Lower leg skin (tissue), 4 donors: ENCODE measurements at regions of chr1 and their contacts with region 1.

Region 1: DNA sequence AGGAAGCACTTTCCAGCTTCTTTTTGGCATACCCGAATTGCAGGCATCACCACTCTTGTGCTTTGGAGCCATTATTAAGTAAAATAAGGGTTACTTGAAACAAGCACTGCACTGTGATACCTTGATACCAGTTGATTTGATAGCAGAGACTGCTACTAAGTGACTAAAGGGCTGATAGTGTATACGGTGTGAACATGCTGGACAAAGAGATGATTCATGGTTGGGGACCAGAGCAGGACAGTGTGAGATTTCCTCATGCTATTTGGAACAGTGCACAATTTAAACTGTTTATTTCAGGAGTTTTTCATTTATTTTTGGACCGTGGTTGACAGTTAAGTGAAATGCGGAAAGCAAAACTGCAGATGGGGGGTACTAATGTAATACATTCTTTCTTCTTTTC is 9.9 kb downstream of the RPS27 start:
- DNase-seq: no peak
- H3K4me3 ChIP-seq: no peak overlapping the region
- CTCF ChIP-seq: no peak
- POLR2A ChIP-seq: no peak

Region 2: DNA sequence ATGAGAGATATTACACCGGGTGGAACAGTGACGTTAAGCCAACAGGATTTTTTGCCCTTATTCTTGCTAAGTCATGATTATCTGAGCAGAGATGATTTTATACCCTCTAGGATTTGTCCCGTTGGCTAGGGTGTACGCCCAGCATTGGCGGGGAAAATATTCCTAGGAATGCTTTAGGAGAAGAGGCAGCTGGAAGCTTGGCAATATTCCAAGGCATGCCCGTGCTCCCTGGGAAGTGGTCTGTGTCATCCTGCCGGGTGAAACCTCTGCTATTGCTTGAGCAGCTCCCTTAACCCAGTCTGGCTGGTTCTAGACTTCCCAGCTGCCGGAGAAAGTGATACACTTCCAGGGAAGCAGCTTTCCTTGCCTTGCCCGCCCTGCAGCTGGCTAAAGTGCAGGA is 583.4 kb after region 1 on chr1:
- intact Hi-C with region 1: loop called (anchors 5 kb)
- DNase-seq: no peak
- H3K4me3 ChIP-seq: no peak overlapping the region
- CTCF ChIP-seq: no peak
- POLR2A ChIP-seq: no peak